PC-9 (cell line): ENCODE measurements at regions of chr7 and their contacts with region 1.

Region 1: GRCh38 chr7:149147072-149147751 is at the start of gene ZNF398:
- DNase-seq: peak; percentile 53 to 78
- H3K4me3 ChIP-seq: peak within 1 kb of the TSS; percentile 98
- H3K27ac ChIP-seq: peak within 1 kb of the TSS; percentile 95
- H3K4me1 ChIP-seq: peaks cover 51% of the 10 kb centered on the region
- H3K27me3 ChIP-seq: no peaks in the 10 kb centered on the region
- CTCF ChIP-seq: peak; percentile 76
- total RNA-seq, gene ZNF398: 10.8 and 11.7 TPM in 2 replicates

Region 2: GRCh38 chr7:149067876-149068275 is 79.3 kb before region 1 on chr7:
- CTCF ChIA-PET with region 1: interaction called, 3 read pairs
- POLR2A ChIA-PET with region 1: no interaction called
- intact Hi-C with region 1: loop called (anchors 5 kb)
- DNase-seq: no peak
- H3K4me3 ChIP-seq: no peak overlapping the region
- H3K27ac ChIP-seq: no peak overlapping the region
- H3K4me1 ChIP-seq: peaks cover 4% of the 10 kb centered on the region; the same call in 1 of the 2 replicates
- H3K27me3 ChIP-seq: no peaks in the 10 kb centered on the region
- CTCF ChIP-seq: peak; percentile 47; the same call in 1 of the 2 replicates

Region 3: DNA sequence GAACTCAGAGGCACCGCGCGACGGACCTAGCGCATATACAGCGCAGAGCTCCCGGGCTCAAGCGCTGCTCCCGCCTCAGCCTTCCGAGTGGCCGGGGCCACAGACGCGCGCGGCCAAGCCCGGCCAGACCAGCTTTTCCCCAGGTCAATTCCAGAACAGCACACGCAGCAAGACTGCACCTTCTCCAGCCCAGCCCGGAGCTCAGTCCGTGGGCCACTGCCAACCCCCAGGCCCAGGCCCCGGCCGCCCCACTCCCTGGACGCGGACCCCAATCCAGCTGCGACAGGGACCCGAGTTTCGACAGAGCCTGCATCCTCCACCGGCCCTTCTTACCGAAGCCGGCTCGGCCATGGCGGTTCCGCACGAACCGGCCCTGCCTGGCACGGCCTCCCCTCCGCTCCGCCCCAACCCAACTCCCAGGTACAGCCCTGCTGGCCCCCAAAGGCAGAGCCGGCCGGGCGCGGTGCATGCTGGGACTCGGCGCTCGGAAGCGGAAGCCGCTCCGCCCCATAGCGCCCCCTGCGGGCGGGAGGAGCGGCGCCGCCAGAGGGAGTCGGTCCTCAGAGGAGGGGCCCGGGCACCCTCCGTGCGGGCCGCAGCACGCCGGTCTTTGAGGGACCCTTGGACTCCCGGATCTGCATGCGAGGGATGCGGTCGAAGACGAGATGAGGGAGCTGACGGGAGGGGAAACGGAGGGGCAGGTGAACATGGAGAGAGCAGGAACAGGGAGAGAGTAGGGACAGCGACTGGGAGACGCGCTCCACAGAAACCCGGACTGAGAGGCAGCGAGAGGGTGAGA is 21.1 kb before region 1 on chr7 and contains the start of gene ZNF425:
- CTCF ChIA-PET with region 1: interaction called, 10 read pairs
- POLR2A ChIA-PET with region 1: no interaction called
- intact Hi-C with region 1: loop called (anchors 1 kb)
- DNase-seq: peak; percentile 82 to 97
- H3K4me3 ChIP-seq: peak within 1 kb of the TSS; percentile 92
- H3K27ac ChIP-seq: peak within 1 kb of the TSS; percentile 64
- H3K4me1 ChIP-seq: peaks cover 17% of the 10 kb centered on the region
- H3K27me3 ChIP-seq: no peaks in the 10 kb centered on the region
- CTCF ChIP-seq: peak; percentile 97
- total RNA-seq, gene ZNF425: 5.2 and 5.9 TPM in 2 replicates

Region 4: GRCh38 chr7:149232362-149233062 is 85.3 kb after region 1 on chr7:
- CTCF ChIA-PET with region 1: interaction called, 6 read pairs
- POLR2A ChIA-PET with region 1: no interaction called
- intact Hi-C with region 1: loop called (anchors 1 kb)
- DNase-seq: no peak
- H3K4me3 ChIP-seq: no peak overlapping the region
- H3K27ac ChIP-seq: peak overlapping the region; percentile 93
- H3K4me1 ChIP-seq: peaks cover 55% of the 10 kb centered on the region
- H3K27me3 ChIP-seq: no peaks in the 10 kb centered on the region
- CTCF ChIP-seq: no peak

Region 5: GRCh38 chr7:149355390-149356048 is 208.3 kb after region 1 on chr7:
- CTCF ChIA-PET with region 1: no interaction called
- POLR2A ChIA-PET with region 1: no interaction called
- intact Hi-C with region 1: loop called (anchors 5 kb)
- DNase-seq: peak; percentile 93 to 95
- H3K4me3 ChIP-seq: peak overlapping the region; percentile 38; the same call in 1 of the 2 replicates
- H3K27ac ChIP-seq: peak overlapping the region; percentile 58
- H3K4me1 ChIP-seq: peaks cover 23% of the 10 kb centered on the region
- H3K27me3 ChIP-seq: no peaks in the 10 kb centered on the region
- CTCF ChIP-seq: peak; percentile 53; the same call in 1 of the 2 replicates